ENCODE measurements at regions of chr9 and their contacts with region 1.

Region 1: GRCh38 chr9:129068990-129069861 is 11.7 kb upstream of the DOLPP1 start:
- DNase-seq: peak; percentile 87
- ATAC-seq: peak; percentile 97
- H3K4me3 ChIP-seq: peak overlapping the region in 4 of 5 experiments; percentile 26 to 39 (median 38)
- H3K4me3 Mint-ChIP-seq: peak overlapping the region; percentile 83
- H3K27ac ChIP-seq: peak overlapping the region; percentile 77 to 79
- H3K27ac Mint-ChIP-seq: peak overlapping the region; percentile 97
- H3K4me1 ChIP-seq: peaks cover 25 to 37% of the 10 kb centered on the region in 2 donors
- H3K4me1 Mint-ChIP-seq: peaks cover 25% of the 10 kb centered on the region
- H3K27me3 ChIP-seq: no peaks in the 10 kb centered on the region
- H3K27me3 Mint-ChIP-seq: no peaks in the 10 kb centered on the region
- CTCF ChIP-seq: no peak

Region 2: DNA sequence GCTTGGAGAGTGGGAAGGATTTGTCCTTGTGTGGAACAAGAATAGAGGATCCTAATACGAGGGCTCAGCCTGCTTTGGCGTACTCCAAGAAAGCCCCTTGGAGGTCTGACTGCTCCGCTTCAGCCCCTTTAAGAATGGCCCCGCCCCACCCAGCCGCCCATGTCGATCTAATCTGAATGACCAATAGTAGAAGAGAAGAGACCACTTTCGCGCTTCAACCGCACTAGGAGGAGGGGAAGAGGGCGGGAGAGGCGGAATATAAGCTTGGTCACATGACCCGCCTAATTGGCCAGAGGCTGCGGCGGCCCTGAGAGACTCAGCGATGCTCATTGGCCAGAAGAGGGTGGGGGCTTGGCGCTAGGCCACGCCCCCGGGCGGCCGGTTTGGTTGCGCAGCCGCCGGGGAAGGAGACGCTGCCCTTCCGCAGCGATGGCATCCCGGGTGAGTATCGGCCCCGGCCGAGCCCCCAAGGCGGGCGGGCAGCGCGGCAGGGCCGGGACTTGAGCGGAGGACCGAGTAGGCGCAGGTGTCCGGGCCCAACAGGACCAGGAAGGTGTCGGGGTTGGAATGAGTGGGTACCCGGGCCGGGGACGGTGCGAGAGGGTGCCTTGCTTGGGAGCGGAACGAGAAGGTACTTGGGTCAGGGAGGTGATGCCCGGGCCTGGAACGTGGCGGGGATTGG is 32.8 kb before region 1 on chr9 and contains the start of gene MIGA2:
- CTCF ChIA-PET with region 1: interaction called, 5 read pairs
- POLR2A ChIA-PET with region 1: interaction called, 4 read pairs
- intact Hi-C with region 1: loop called (anchors 1 kb)
- DNase-seq: peak; percentile 98
- ATAC-seq: peak; percentile 99
- H3K4me3 ChIP-seq: peak within 1 kb of the TSS; percentile 51 to 98 (median 91)
- H3K4me3 Mint-ChIP-seq: peak within 1 kb of the TSS; percentile 97
- H3K27ac ChIP-seq: peak within 1 kb of the TSS; percentile 9 to 82
- H3K27ac Mint-ChIP-seq: peak within 1 kb of the TSS; percentile 85
- H3K4me1 ChIP-seq: peaks cover 19 to 25% of the 10 kb centered on the region in 2 donors
- H3K4me1 Mint-ChIP-seq: peaks cover 34% of the 10 kb centered on the region
- H3K27me3 ChIP-seq: no peaks in the 10 kb centered on the region
- H3K27me3 Mint-ChIP-seq: no peaks in the 10 kb centered on the region
- CTCF ChIP-seq: no peak
- total RNA-seq, gene MIGA2: 71.6 and 78.1 TPM in 2 replicates

Region 3: DNA sequence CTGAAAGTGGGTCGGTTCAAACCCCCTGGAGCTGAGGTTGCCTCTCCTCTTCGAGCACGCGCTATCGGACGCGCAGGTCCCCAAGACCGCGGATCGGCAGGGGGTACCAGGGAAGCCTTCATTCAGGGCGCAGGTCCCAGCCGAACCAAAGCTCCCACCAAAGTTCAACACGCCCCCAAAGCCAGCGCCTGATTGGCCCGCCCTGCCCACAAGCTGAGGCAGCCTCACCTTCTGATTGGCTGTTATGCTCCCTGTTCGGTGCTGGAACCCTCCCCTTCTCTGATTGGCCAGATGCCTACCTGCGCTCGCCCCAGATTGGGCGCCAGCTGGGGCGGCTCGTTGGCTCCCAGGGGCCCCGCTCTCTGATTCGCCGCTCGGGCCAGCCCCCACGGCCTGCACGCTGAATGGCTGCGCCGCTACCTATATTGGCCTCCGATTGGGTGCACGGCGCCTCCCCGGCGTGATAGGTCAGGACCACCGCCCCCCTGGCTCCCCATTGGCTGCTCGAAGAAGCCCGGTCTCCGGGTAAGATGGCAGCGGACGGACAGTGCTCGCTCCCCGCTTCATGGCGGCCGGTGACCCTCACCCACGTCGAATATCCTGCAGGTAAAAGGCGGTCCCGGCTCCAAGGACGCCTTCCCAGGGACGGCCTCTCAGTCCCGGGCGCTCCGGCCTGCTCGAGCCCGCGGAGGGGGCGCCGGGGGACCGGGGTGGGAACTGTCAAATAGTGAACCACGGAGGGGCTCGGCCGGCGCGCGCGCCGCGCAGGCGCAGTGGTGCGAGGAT is 11.6 kb after region 1 on chr9 and contains the start of gene DOLPP1:
- CTCF ChIA-PET with region 1: interaction called, 7 read pairs
- POLR2A ChIA-PET with region 1: interaction called, 15 read pairs
- intact Hi-C with region 1: loop called (anchors 1 kb)
- DNase-seq: peak; percentile 99
- ATAC-seq: peak; percentile 92
- H3K4me3 ChIP-seq: peak within 1 kb of the TSS; percentile 67 to 90 (median 75)
- H3K4me3 Mint-ChIP-seq: peak within 1 kb of the TSS; percentile 91
- H3K27ac ChIP-seq: peak within 1 kb of the TSS; percentile 42 to 79
- H3K27ac Mint-ChIP-seq: peak within 1 kb of the TSS; percentile 88
- H3K4me1 ChIP-seq: peaks cover 16 to 20% of the 10 kb centered on the region in 2 donors
- H3K4me1 Mint-ChIP-seq: peaks cover 23% of the 10 kb centered on the region
- H3K27me3 ChIP-seq: no peaks in the 10 kb centered on the region
- H3K27me3 Mint-ChIP-seq: no peaks in the 10 kb centered on the region
- CTCF ChIP-seq: no peak
- total RNA-seq, gene DOLPP1: 4.7 and 7.1 TPM in 2 replicates

Region 4: DNA sequence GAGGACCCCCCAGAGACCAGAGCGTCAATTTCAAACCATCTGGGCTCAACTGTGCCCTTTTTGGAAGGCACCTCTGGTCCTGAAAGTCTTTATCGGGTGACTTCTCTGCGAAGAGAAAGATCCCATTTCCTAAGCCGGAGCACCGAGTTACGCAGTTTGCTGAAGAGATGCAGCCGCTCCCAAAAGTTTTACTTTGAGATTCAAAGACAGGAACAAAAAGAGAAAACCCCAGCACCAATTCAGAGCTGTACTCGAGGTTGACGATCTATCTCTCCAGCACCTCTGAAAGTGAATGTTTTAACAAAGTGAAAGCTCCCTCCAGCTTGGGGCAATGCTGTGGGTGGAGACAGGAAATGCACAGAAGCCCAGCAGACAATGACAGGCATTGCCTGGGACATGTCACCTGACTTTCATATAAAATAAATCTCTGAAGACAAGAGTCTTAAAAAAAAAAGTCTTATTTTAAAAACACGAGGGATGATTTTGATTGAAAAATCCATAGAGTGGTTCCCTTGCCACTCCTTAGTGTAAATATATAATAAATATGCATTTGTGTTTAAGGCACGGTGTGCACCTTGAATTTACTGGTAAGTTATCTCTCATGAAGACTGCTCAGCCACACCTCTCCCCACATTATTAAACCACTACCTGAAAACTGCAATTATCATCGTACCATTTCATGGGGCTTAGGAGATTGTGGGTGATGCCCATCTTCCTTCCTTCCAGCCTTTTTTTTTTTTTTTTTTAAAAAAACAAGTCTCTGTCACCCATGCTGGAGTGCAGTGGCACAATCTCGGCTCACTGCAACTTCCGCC is 893.9 kb after region 1 on chr9:
- CTCF ChIA-PET with region 1: no interaction called
- POLR2A ChIA-PET with region 1: interaction called, 11 read pairs
- intact Hi-C with region 1: no loop called
- DNase-seq: peak; percentile 88
- ATAC-seq: peak; percentile 96
- H3K4me3 ChIP-seq: peak overlapping the region; percentile 43 to 81 (median 58)
- H3K4me3 Mint-ChIP-seq: peak overlapping the region; percentile 83
- H3K27ac ChIP-seq: peak overlapping the region; percentile 93 to 96
- H3K27ac Mint-ChIP-seq: peak overlapping the region; percentile 93
- H3K4me1 ChIP-seq: peaks cover 30 to 35% of the 10 kb centered on the region in 2 donors
- H3K4me1 Mint-ChIP-seq: peaks cover 61% of the 10 kb centered on the region
- H3K27me3 ChIP-seq: no peaks in the 10 kb centered on the region
- H3K27me3 Mint-ChIP-seq: no peaks in the 10 kb centered on the region
- CTCF ChIP-seq: no peak

Measured in B cell (primary cell).